Heart right ventricle (tissue), 16 donors: ENCODE measurements at regions of chr19 and their contacts with region 1.

Region 1: GRCh38 chr19:33406521-33407139 is 33.1 kb downstream of the CEBPG start:
- DNase-seq: peak; percentile 60 to 71
- ATAC-seq: peak; percentile 59 to 83 (median 76)
- H3K4me3 ChIP-seq: no peak overlapping the region
- H3K27ac ChIP-seq: no peak overlapping the region
- H3K4me1 ChIP-seq: peaks cover 0 to 20% (median 0%) of the 10 kb centered on the region in 9 donors
- H3K27me3 ChIP-seq: no peaks in the 10 kb centered on the region
- CTCF ChIP-seq: peak; percentile 92 to 99 (median 96)

Region 2: DNA sequence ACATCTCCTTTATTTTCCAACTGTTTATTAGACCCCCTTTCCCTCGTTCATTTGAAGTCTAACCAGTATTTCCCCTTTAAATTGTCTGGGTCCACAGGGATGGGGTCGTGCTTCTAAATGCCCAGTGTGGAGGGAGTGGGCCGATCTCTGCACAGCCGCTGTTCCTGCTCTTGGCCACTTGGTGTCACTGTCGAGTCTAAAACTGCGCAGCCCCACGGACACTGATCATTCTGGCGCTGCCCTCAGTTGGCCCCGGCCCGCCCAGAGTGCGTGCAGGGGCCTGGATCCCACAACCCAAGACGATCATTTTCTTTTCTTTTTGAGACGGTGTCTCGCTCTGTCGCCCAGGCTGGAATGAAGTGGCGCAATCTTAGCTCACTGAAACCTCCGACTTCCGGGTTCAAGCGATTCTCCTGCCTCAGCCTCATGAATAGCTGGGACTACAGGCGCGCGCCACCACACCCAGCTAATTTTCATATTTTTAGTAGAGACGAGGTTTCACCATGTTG is 262.7 kb before region 1 on chr19:
- intact Hi-C with region 1: loop called in 2 of 10 experiments (anchors 10 kb)
- DNase-seq: peak; percentile 53 to 57
- ATAC-seq: peak; percentile 91 to 98 (median 96)
- H3K4me3 ChIP-seq: peak overlapping the region in 1 of 10 donors; percentile 9
- H3K27ac ChIP-seq: no peak overlapping the region
- H3K4me1 ChIP-seq: peaks cover 0 to 7% (median 0%) of the 10 kb centered on the region in 9 donors
- H3K27me3 ChIP-seq: peaks cover 0 to 18% (median 4%) of the 10 kb centered on the region in 7 donors
- CTCF ChIP-seq: peak; percentile 77 to 95 (median 94)

Region 3: DNA sequence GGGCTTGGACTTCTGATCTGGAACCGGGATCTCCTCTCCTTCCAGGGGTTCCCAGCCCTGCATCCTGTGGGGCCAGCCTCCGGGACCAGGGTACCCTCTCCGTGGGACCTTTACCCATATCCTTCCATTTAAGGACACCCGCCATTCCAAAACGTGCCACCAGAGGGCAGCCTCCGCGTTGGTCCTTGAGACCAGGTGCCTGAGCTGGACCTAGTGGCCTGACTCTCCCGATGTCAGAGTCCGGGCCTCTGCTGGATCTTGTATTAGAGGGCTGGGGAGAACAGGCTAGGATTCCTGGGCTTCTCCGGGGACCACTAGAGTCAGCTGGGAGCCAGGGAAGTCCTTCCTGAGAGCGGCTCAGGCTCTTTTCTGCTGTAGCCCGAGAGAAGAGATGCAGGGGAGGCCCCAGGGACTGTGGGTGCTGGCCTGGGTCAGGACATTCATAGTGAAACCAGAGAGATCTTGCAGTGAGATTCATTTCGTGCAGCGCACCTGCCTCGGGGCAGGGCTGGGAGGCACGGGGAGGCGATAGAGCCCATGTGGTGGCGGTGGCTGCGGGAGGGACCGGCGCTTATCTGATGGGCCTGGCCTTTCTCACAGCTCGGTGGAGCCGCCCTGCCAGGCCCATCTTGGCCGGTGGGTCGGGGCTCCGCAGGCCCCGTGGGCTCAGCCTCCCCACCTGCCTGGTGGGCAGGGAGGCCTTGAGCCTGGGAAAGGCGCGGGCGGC is 171.2 kb before region 1 on chr19:
- intact Hi-C with region 1: loop called in 9 of 10 experiments (anchors 1 to 2 kb)
- DNase-seq: peak; percentile 71 to 82
- ATAC-seq: peak; percentile 56 to 79 (median 71)
- H3K4me3 ChIP-seq: no peak overlapping the region
- H3K27ac ChIP-seq: no peak overlapping the region
- H3K4me1 ChIP-seq: peaks cover 0 to 13% (median 0%) of the 10 kb centered on the region in 9 donors
- H3K27me3 ChIP-seq: peaks cover 4 to 48% (median 24%) of the 10 kb centered on the region in 7 donors
- CTCF ChIP-seq: peak; percentile 74 to 95 (median 91)

Region 4: GRCh38 chr19:33241530-33242101 is 165.0 kb before region 1 on chr19:
- intact Hi-C with region 1: loop called in 6 of 10 experiments (anchors 1 to 2 kb)
- DNase-seq: peak in 1 of 2 donors; percentile 29
- ATAC-seq: peak; percentile 41 to 75 (median 59)
- H3K4me3 ChIP-seq: no peak overlapping the region
- H3K27ac ChIP-seq: no peak overlapping the region
- H3K4me1 ChIP-seq: peaks cover 0 to 8% (median 5%) of the 10 kb centered on the region in 9 donors
- H3K27me3 ChIP-seq: peaks cover 0 to 23% (median 10%) of the 10 kb centered on the region in 7 donors
- CTCF ChIP-seq: peak; percentile 56 to 85 (median 78)

Region 5: DNA sequence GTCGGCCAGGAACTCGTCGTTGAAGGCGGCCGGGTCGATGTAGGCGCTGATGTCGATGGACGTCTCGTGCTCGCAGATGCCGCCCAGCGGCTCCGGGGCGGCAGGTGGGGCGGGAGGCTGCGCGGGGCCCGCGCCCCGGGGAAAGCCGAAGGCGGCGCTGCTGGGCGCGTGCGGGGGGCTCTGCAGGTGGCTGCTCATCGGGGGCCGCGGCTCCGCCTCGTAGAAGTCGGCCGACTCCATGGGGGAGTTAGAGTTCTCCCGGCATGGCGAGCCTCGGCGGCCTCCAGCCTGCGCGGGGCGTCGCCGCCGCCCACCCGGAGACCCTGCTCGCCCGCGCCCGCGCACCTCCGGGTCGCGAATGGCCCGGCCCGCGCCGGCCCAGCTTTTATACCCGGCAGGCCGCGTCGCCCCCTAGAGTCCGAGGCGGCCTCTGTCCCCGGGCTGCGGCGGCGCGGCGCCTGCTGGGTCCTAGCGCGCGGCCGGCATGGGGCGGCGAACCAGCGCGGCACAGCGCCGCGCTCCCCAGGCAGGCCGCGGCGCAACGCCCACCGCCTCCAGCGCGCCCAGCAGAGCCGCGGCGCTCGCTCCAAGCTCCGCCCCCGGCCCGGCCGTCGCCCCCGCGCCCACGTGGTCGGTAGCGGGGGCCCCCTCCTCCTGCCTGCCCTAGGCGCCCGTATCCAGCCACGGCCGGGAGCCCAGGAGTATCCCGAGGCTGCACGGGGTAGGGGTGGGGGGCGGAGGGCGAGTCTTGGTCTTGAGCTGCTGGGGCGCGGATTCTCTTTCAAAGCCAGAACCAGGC is 104.3 kb before region 1 on chr19 and contains the start of gene CEBPA:
- intact Hi-C with region 1: loop called in 6 of 10 experiments (anchors 5 to 10 kb)
- DNase-seq: peak; percentile 69 to 82
- ATAC-seq: peak; percentile 79 to 94 (median 89)
- H3K4me3 ChIP-seq: peak within 1 kb of the TSS; percentile 54 to 90 (median 79)
- H3K27ac ChIP-seq: peak within 1 kb of the TSS in 9 of 10 donors; percentile 34 to 86 (median 63)
- H3K4me1 ChIP-seq: peaks cover 3 to 46% (median 22%) of the 10 kb centered on the region in 9 donors
- H3K27me3 ChIP-seq: peaks cover 5 to 51% (median 36%) of the 10 kb centered on the region in 7 donors
- CTCF ChIP-seq: peak in 8 of 9 donors; percentile 24 to 69 (median 48)
- total RNA-seq, gene CEBPA: 0.71 to 7.7 (median 2.8) TPM

Region 6: DNA sequence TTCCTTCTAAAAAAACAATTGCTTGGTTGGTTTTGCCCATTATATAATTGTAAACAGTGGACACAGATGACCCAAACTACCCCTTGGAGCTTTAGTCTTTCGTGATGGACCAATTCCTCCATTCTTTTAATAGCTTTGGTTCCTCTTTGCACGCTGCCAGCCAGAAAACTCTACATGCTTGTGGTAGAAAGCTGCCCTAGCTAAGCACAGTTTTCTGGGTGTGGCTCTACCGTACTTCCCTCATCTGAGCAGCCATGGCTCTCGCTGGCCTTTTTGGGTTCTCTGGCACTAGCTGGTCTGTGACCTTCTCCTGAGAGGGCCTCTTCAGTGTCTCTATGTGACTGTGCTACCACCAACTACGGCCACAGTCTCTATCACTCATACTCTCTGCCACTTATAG is 74.4 kb before region 1 on chr19:
- intact Hi-C with region 1: loop called in 1 of 10 experiments (anchors 5 kb)
- DNase-seq: no peak
- ATAC-seq: peak in 5 of 8 donors; percentile 42 to 64 (median 55)
- H3K4me3 ChIP-seq: no peak overlapping the region
- H3K27ac ChIP-seq: peak overlapping the region in 1 of 10 donors; percentile 10
- H3K4me1 ChIP-seq: peaks cover 0 to 27% (median 0%) of the 10 kb centered on the region in 9 donors
- H3K27me3 ChIP-seq: peaks cover 0 to 13% (median 7%) of the 10 kb centered on the region in 7 donors
- CTCF ChIP-seq: no peak

Region 7: GRCh38 chr19:33363476-33363875 is 43.2 kb before region 1 on chr19:
- intact Hi-C with region 1: loop called in 1 of 10 experiments (anchors 5 kb)
- DNase-seq: no peak
- ATAC-seq: no peak
- H3K4me3 ChIP-seq: no peak overlapping the region
- H3K27ac ChIP-seq: no peak overlapping the region
- H3K4me1 ChIP-seq: no peaks in the 10 kb centered on the region
- H3K27me3 ChIP-seq: peaks cover 0 to 27% (median 0%) of the 10 kb centered on the region in 7 donors
- CTCF ChIP-seq: no peak

Region 8: GRCh38 chr19:33720691-33721682 is 314.4 kb after region 1 on chr19:
- intact Hi-C with region 1: no loop called
- DNase-seq: no peak
- ATAC-seq: no peak
- H3K4me3 ChIP-seq: no peak overlapping the region
- H3K27ac ChIP-seq: no peak overlapping the region
- H3K4me1 ChIP-seq: no peaks in the 10 kb centered on the region
- H3K27me3 ChIP-seq: peaks cover 0 to 38% (median 13%) of the 10 kb centered on the region in 7 donors
- CTCF ChIP-seq: peak in 1 of 9 donors; percentile 24